ENCODE measurements at regions of chr12 and their contacts with region 1.

Region 1: DNA sequence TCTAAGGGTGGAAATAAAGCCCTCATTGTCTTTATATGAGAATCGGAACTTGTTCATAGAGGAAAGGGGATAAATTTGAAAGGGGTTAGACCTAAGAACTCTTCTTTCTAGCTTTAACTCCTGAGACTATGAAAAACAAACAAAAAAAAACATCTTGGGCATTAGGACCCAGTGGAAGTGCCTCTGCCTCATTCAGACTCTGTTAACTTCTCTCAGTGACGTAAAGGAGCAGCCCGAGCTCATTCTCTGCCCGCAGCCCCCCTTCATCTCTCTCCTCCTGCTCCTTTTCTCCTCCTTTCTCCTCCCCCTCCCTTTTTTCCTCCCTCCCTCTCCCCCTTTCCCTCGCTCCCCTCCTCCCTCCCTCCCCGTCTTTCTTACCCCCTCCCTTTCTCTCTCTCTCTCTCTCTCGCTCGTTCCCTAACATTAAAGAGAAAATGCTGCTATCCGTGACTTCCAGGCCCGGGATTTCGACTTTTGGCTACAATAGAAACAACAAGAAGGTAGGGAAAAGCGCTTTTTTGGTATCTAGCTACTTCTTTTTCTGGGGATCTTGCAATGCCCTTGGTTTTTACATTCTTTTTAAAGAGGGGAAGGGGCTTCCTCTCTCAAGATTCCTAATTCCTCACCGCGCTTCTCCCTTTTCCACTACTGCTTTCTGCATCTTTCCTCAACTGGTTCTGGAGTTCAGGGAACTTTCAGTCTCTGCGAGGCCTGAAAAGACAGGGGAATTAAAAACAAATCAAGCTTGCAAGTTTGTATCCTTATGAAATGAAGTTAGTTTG is at the start of gene RBMS2:
- DNase-seq: peak; percentile 68 to 91
- ATAC-seq: peak; percentile 91 to 97 (median 94)
- H3K4me3 ChIP-seq: peak within 1 kb of the TSS; percentile 45 to 74 (median 64)
- H3K27ac ChIP-seq: peak within 1 kb of the TSS; percentile 83 to 97 (median 91)
- H3K4me1 ChIP-seq: peaks cover 7 to 71% (median 53%) of the 10 kb centered on the region in 9 donors
- H3K27me3 ChIP-seq: no peaks in the 10 kb centered on the region
- CTCF ChIP-seq: no peak
- total RNA-seq, gene RBMS2: 24.5 to 39.6 (median 31.5) TPM

Region 2: GRCh38 chr12:56565510-56566101 is 43.8 kb after region 1 on chr12:
- intact Hi-C with region 1: loop called in 3 of 10 experiments (anchors 2 kb)
- DNase-seq: peak; percentile 67 to 93
- ATAC-seq: peak; percentile 94 to 96 (median 95)
- H3K4me3 ChIP-seq: peak overlapping the region in 3 of 10 donors; percentile 1 to 20 (median 14)
- H3K27ac ChIP-seq: peak overlapping the region; percentile 63 to 90 (median 84)
- H3K4me1 ChIP-seq: peaks cover 7 to 59% (median 50%) of the 10 kb centered on the region in 9 donors
- H3K27me3 ChIP-seq: no peaks in the 10 kb centered on the region
- CTCF ChIP-seq: peak in 4 of 9 donors; percentile 23 to 46 (median 32)

Region 3: GRCh38 chr12:56571126-56571525 is 49.3 kb after region 1 on chr12:
- intact Hi-C with region 1: loop called in 2 of 10 experiments (anchors 1 to 2 kb)
- DNase-seq: no peak
- ATAC-seq: peak in 5 of 8 donors; percentile 13 to 52 (median 36)
- H3K4me3 ChIP-seq: no peak overlapping the region
- H3K27ac ChIP-seq: peak overlapping the region in 8 of 10 donors; percentile 3 to 90 (median 64)
- H3K4me1 ChIP-seq: peaks cover 6 to 59% (median 38%) of the 10 kb centered on the region in 9 donors
- H3K27me3 ChIP-seq: no peaks in the 10 kb centered on the region
- CTCF ChIP-seq: no peak

Region 4: GRCh38 chr12:56630160-56630632 is 108.4 kb after region 1 on chr12 and contains the start of gene BAZ2A:
- intact Hi-C with region 1: loop called in 6 of 10 experiments (anchors 5 to 10 kb)
- DNase-seq: peak; percentile 90 to 92
- ATAC-seq: peak; percentile 88 to 92 (median 89)
- H3K4me3 ChIP-seq: peak within 1 kb of the TSS; percentile 65 to 100 (median 99)
- H3K27ac ChIP-seq: peak within 1 kb of the TSS; percentile 81 to 100 (median 96)
- H3K4me1 ChIP-seq: peaks cover 29 to 74% (median 72%) of the 10 kb centered on the region in 9 donors
- H3K27me3 ChIP-seq: no peaks in the 10 kb centered on the region
- CTCF ChIP-seq: no peak
- total RNA-seq, gene BAZ2A: 28.7 to 58.7 (median 42.6) TPM

Region 5: GRCh38 chr12:56657416-56658379 is 135.9 kb after region 1 on chr12:
- intact Hi-C with region 1: no loop called
- DNase-seq: no peak
- ATAC-seq: no peak
- H3K4me3 ChIP-seq: no peak overlapping the region
- H3K27ac ChIP-seq: no peak overlapping the region
- H3K4me1 ChIP-seq: no peaks in the 10 kb centered on the region
- H3K27me3 ChIP-seq: no peaks in the 10 kb centered on the region
- CTCF ChIP-seq: no peak

Measured in heart right ventricle (tissue), 16 donors.